ENCODE measurements at regions of chr4 and their contacts with region 1.

Region 1: GRCh38 chr4:139530833-139531427 is 25.1 kb downstream of the SETD7 start:
- DNase-seq: peak; percentile 65
- H3K4me3 Mint-ChIP-seq: no peak overlapping the region
- H3K27ac Mint-ChIP-seq: peak overlapping the region; percentile 9
- H3K4me1 Mint-ChIP-seq: peaks cover 10% of the 10 kb centered on the region
- H3K27me3 Mint-ChIP-seq: no peaks in the 10 kb centered on the region
- CTCF ChIP-seq: peak; percentile 57

Region 2: GRCh38 chr4:139453371-139454110 is 77.4 kb before region 1 on chr4:
- CTCF ChIA-PET with region 1: interaction called, 4 read pairs
- POLR2A ChIA-PET with region 1: interaction called, 3 read pairs
- intact Hi-C with region 1: loop called (anchors 2 kb)
- DNase-seq: peak; percentile 98
- H3K4me3 Mint-ChIP-seq: peak overlapping the region; percentile 100
- H3K27ac Mint-ChIP-seq: peak overlapping the region; percentile 97
- H3K4me1 Mint-ChIP-seq: peaks cover 45% of the 10 kb centered on the region
- H3K27me3 Mint-ChIP-seq: no peaks in the 10 kb centered on the region
- CTCF ChIP-seq: no peak

Measured in MCF 10A (cell line).